CD4-positive, alpha-beta T cell (primary cell): ENCODE measurements at regions of chr6 and their contacts with region 1.

Region 1: DNA sequence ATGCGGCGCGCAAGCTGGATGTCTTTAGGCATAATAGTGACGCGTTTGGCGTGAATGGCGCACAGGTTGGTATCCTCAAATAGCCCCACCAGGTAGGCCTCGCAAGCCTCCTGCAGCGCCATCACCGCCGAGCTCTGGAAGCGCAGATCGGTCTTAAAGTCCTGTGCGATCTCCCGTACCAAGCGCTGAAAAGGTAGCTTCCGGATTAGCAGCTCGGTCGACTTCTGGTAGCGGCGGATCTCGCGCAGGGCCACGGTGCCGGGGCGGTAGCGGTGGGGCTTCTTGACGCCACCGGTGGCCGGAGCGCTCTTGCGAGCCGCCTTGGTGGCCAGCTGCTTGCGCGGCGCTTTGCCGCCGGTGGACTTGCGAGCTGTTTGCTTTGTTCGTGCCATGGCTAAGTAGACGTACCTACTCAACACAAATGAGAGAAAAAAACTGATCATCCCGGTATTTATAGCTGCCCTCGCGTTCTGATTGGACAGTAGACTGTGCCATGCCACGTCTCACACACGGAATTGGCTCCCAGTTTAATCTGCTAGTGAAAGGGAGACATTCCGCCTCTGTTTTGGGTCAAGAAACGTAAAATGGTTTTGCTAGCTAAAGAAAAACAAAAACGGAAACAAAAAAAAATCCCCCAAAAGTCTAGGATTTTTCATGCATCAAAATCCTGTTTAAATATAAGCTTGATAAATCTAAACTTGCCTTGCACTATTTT is 40.1 kb downstream of the OR2B2 start:
- DNase-seq: peak; percentile 71 to 97 (median 82)
- ATAC-seq: peak; percentile 75
- H3K4me3 ChIP-seq: peak overlapping the region; percentile 86
- H3K4me3 Mint-ChIP-seq: peak overlapping the region; percentile 93
- H3K27ac ChIP-seq: peak overlapping the region; percentile 89
- H3K27ac Mint-ChIP-seq: peak overlapping the region; percentile 93
- H3K4me1 ChIP-seq: peaks cover 39% of the 10 kb centered on the region
- H3K4me1 Mint-ChIP-seq: peaks cover 41% of the 10 kb centered on the region
- H3K27me3 ChIP-seq: no peaks in the 10 kb centered on the region
- H3K27me3 Mint-ChIP-seq: no peaks in the 10 kb centered on the region
- CTCF ChIP-seq: peak; percentile 43

Region 2: DNA sequence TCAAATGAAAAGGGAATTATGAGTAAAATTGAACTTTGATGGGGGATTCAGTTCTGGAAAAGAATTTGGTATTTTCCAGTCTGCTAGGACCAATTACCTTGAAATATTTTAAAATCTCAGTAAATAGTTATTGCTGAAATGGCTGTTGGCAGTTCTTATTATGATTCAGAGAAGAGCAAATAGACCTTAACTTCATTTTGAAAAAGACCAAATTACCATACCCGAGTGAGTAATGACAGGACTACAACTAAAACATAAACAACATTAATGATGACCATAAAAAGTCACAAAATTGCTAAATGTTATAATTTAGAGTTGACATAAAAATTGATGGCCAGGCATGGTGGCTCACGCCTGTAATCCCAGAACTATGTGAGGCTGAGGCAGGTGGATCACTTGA is 1887.8 kb before region 1 on chr6:
- CTCF ChIA-PET with region 1: no interaction called
- POLR2A ChIA-PET with region 1: no interaction called
- intact Hi-C with region 1: no loop called
- DNase-seq: no peak
- ATAC-seq: no peak
- H3K4me3 ChIP-seq: no peak overlapping the region
- H3K4me3 Mint-ChIP-seq: no peak overlapping the region
- H3K27ac ChIP-seq: no peak overlapping the region
- H3K27ac Mint-ChIP-seq: no peak overlapping the region
- H3K4me1 ChIP-seq: no peaks in the 10 kb centered on the region
- H3K4me1 Mint-ChIP-seq: peaks cover 14% of the 10 kb centered on the region
- H3K27me3 ChIP-seq: no peaks in the 10 kb centered on the region
- H3K27me3 Mint-ChIP-seq: no peaks in the 10 kb centered on the region
- CTCF ChIP-seq: no peak

Region 3: DNA sequence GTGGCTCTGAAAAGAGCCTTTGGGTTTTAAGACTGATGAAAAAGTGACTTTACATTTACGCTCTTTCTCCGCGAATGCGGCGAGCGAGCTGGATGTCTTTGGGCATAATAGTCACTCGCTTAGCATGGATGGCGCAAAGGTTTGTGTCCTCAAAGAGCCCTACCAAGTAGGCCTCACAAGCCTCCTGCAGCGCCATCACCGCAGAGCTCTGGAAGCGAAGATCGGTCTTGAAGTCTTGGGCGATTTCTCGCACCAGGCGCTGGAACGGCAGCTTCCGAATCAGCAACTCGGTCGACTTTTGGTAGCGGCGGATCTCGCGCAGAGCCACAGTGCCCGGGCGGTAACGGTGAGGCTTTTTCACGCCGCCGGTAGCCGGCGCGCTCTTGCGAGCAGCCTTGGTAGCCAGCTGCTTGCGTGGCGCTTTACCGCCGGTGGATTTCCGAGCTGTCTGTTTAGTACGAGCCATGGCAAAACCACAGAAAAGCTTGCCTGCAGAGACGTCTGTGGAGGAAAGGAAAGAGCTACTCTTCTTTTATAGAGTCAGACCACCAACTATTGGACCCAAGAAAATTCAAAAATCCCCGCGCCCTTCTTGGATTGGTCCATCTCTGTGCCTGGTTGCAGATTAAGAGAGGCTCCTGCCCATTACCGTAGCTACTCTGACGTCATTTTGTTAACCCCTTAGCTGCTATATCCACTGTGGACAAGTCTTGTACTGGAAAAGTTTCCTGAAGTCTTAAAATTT is 1840.3 kb before region 1 on chr6:
- CTCF ChIA-PET with region 1: no interaction called
- POLR2A ChIA-PET with region 1: interaction called, 25 read pairs
- intact Hi-C with region 1: no loop called
- DNase-seq: peak; percentile 73 to 94 (median 81)
- ATAC-seq: peak; percentile 65
- H3K4me3 ChIP-seq: peak overlapping the region; percentile 64
- H3K4me3 Mint-ChIP-seq: peak overlapping the region; percentile 97
- H3K27ac ChIP-seq: peak overlapping the region; percentile 42 to 72
- H3K27ac Mint-ChIP-seq: peak overlapping the region; percentile 99
- H3K4me1 ChIP-seq: peaks cover 35% of the 10 kb centered on the region
- H3K4me1 Mint-ChIP-seq: peaks cover 46% of the 10 kb centered on the region
- H3K27me3 ChIP-seq: no peaks in the 10 kb centered on the region
- H3K27me3 Mint-ChIP-seq: no peaks in the 10 kb centered on the region
- CTCF ChIP-seq: peak; percentile 22

Region 4: GRCh38 chr6:27157459-27158315 is 714.4 kb before region 1 on chr6:
- CTCF ChIA-PET with region 1: no interaction called
- POLR2A ChIA-PET with region 1: interaction called, 13 read pairs
- intact Hi-C with region 1: no loop called
- DNase-seq: peak; percentile 73 to 93 (median 85)
- ATAC-seq: peak; percentile 88
- H3K4me3 ChIP-seq: peak overlapping the region; percentile 59
- H3K4me3 Mint-ChIP-seq: peak overlapping the region; percentile 90
- H3K27ac ChIP-seq: peak overlapping the region in 1 of 2 donors; percentile 32
- H3K27ac Mint-ChIP-seq: peak overlapping the region; percentile 96
- H3K4me1 ChIP-seq: peaks cover 22% of the 10 kb centered on the region
- H3K4me1 Mint-ChIP-seq: peaks cover 44% of the 10 kb centered on the region
- H3K27me3 ChIP-seq: no peaks in the 10 kb centered on the region
- H3K27me3 Mint-ChIP-seq: peaks cover 7% of the 10 kb centered on the region
- CTCF ChIP-seq: peak; percentile 78

Region 5: DNA sequence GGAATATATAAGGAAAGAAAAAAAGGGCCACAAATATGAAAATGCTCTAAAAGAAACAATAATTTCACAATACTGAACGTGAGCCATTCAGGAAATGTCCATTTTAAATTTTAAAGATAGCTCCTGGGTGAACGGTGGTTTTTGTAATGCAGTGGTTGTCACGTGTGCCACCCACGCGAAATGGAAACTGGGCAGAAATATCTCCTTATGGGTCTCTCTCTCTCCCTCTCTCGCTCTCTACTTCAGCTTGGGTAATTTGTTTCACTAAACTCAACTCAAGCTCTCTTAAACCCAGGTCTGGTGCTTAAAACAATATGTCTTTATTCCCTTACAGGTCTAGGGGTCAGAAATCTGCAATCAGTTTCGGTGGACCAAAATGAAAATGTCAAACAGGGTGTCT is 110.7 kb before region 1 on chr6:
- CTCF ChIA-PET with region 1: no interaction called
- POLR2A ChIA-PET with region 1: interaction called, 11 read pairs
- intact Hi-C with region 1: no loop called
- DNase-seq: peak in 2 of 14 experiments; percentile 11 to 17
- ATAC-seq: peak; percentile 41
- H3K4me3 ChIP-seq: no peak overlapping the region
- H3K4me3 Mint-ChIP-seq: peak overlapping the region; percentile 94
- H3K27ac ChIP-seq: no peak overlapping the region
- H3K27ac Mint-ChIP-seq: peak overlapping the region; percentile 98
- H3K4me1 ChIP-seq: peaks cover 14% of the 10 kb centered on the region
- H3K4me1 Mint-ChIP-seq: peaks cover 40% of the 10 kb centered on the region
- H3K27me3 ChIP-seq: no peaks in the 10 kb centered on the region
- H3K27me3 Mint-ChIP-seq: peaks cover 2% of the 10 kb centered on the region
- CTCF ChIP-seq: no peak

Region 6: DNA sequence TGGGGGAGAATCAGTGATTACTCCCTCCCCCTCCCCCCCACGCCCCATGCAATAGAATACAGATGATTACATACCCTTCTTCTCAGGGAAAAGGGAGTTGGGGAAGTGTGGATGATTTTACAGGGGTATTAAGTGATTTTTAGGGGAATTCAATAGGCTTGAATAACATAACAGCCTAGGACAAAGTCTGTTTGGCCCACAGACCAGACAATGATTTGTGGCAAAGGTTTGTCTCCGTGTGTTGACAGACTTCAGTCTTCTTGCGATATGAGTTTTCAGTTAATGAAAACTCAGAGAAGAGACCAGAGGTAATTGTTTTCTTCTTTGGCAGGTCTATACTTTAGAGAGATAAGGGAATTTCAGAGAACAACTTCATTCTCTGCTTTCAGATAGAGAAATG is 55.2 kb before region 1 on chr6:
- CTCF ChIA-PET with region 1: interaction called, 38 read pairs
- POLR2A ChIA-PET with region 1: interaction called, 620 read pairs
- intact Hi-C with region 1: loop called in 1 of 2 experiments (anchors 5 kb)
- DNase-seq: no peak
- ATAC-seq: no peak
- H3K4me3 ChIP-seq: no peak overlapping the region
- H3K4me3 Mint-ChIP-seq: peak overlapping the region; percentile 54
- H3K27ac ChIP-seq: no peak overlapping the region
- H3K27ac Mint-ChIP-seq: no peak overlapping the region
- H3K4me1 ChIP-seq: peaks cover 17% of the 10 kb centered on the region
- H3K4me1 Mint-ChIP-seq: peaks cover 18% of the 10 kb centered on the region
- H3K27me3 ChIP-seq: no peaks in the 10 kb centered on the region
- H3K27me3 Mint-ChIP-seq: no peaks in the 10 kb centered on the region
- CTCF ChIP-seq: no peak

Region 7: GRCh38 chr6:28863604-28864320 is 991.7 kb after region 1 on chr6:
- CTCF ChIA-PET with region 1: no interaction called
- POLR2A ChIA-PET with region 1: interaction called, 10 read pairs
- intact Hi-C with region 1: no loop called
- DNase-seq: peak; percentile 69 to 93 (median 80)
- ATAC-seq: peak; percentile 39
- H3K4me3 ChIP-seq: peak overlapping the region; percentile 82
- H3K4me3 Mint-ChIP-seq: peak overlapping the region; percentile 88
- H3K27ac ChIP-seq: peak overlapping the region; percentile 30 to 47
- H3K27ac Mint-ChIP-seq: peak overlapping the region; percentile 93
- H3K4me1 ChIP-seq: peaks cover 34% of the 10 kb centered on the region
- H3K4me1 Mint-ChIP-seq: peaks cover 51% of the 10 kb centered on the region
- H3K27me3 ChIP-seq: no peaks in the 10 kb centered on the region
- H3K27me3 Mint-ChIP-seq: peaks cover 7% of the 10 kb centered on the region
- CTCF ChIP-seq: peak; percentile 10